OCI-LY7 (cell line): ENCODE measurements at regions of chr1 and their contacts with region 1.

Region 1: GRCh38 chr1:110490791-110491451 is 28.1 kb downstream of the KCNA10 start:
- DNase-seq: no peak
- H3K4me3 ChIP-seq: no peak overlapping the region
- H3K27ac ChIP-seq: no peak overlapping the region
- H3K4me1 ChIP-seq: peaks cover 7% of the 10 kb centered on the region
- CTCF ChIP-seq: no peak

Region 2: DNA sequence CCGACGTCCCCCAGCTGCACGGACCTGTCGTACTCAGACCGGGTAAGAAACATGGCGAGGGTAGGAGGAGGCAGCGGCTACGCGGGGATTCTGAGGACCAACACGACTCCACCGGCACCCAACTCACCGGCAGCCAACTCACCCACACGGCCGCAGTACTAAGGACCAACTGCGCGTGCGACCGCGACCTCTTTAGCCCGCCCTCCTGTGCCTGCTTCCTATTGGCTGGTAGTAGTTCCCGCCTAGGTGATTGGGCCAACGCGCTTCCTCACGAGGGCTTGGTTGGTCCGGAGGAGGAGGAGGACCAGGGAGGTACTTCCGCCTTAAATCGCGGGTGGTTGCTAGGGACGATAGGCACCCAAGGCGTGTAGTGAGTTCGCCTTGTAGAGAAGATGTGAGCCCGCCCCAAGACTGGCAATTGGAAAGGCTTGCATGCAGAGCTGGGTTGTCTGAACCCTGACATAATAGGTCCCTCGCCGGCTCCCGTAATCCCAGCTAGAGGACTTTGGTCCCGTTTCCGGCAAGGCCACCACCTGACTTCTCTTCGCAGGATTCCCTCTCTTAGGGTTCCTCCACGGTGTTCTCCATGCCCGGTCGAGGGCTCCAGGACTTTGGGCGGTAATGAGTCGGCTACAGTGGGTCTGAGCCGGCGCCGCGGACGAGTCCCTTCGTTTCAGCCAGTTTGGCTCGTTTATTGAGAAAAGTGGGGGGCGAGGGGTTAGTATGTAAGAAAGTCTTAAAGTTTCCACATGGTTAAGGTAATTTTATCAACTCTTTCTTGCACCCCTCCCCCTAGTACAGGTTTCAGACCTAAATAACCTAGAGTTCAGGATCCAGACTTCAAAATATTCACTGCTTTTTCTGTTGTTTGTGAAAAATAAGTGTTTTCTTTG is 1064.4 kb before region 1 on chr1 and contains the start of gene PSMA5:
- CTCF ChIA-PET with region 1: interaction called, 13 read pairs
- POLR2A ChIA-PET with region 1: no interaction called
- intact Hi-C with region 1: no loop called
- DNase-seq: peak; percentile 99
- H3K4me3 ChIP-seq: peak within 1 kb of the TSS; percentile 97
- H3K27ac ChIP-seq: peak within 1 kb of the TSS; percentile 85
- H3K4me1 ChIP-seq: peaks cover 25% of the 10 kb centered on the region
- CTCF ChIP-seq: no peak
- total RNA-seq, gene PSMA5: 46.3 and 53.3 TPM in 2 replicates